Panc1 (cell line): ENCODE measurements at regions of chr7 and their contacts with region 1.

Region 1: DNA sequence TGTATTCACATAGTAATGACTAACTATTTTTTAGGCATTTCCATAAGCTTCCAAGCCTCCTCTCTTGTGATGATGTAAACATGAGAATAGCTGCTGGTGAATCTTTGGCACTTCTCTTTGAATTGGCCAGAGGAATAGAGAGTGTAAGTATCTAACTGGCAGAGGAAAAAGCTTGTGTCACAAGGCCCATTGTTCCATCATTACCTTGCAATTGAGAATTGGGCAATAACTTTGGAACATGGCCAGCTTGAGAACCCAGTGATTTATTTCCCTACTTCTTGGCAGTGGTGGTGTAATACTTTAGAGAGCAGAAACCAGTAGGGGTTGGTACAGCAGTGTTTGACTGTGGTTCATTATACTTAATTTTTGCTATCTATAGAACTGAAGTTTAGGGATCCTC is 12.0 kb downstream of the IFRD1 start:
- DNase-seq: no peak
- ATAC-seq: no peak
- H3K4me3 ChIP-seq: no peak overlapping the region
- H3K27ac ChIP-seq: no peak overlapping the region
- H3K4me1 ChIP-seq: no peaks in the 10 kb centered on the region
- H3K27me3 ChIP-seq: no peaks in the 10 kb centered on the region
- CTCF ChIP-seq: no peak

Region 2: DNA sequence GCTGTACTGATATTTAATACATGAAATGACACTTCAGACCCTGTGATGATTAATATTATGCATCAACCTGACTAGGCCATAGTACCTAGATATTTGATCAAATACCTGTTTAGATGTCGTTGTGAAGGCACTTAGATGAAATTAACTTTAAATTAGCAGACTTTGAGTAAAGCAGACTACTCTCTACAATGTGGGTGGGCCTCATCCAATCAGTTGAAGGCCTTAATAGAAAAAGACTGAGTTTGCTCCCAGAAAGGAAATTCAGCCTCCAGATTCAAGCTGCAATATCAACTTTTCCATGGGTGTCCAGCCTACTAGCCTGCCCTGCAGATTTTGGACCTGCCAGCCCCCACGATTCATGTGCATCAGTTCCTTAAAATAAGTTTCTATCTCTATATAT is 396.6 kb after region 1 on chr7:
- CTCF ChIA-PET with region 1: interaction called, 13 read pairs
- POLR2A ChIA-PET with region 1: no interaction called
- in situ Hi-C with region 1: no loop called
- intact Hi-C with region 1: no loop called
- DNase-seq: no peak
- ATAC-seq: no peak
- H3K4me3 ChIP-seq: no peak overlapping the region
- H3K27ac ChIP-seq: no peak overlapping the region
- H3K4me1 ChIP-seq: no peaks in the 10 kb centered on the region
- H3K27me3 ChIP-seq: no peaks in the 10 kb centered on the region
- CTCF ChIP-seq: no peak

Region 3: DNA sequence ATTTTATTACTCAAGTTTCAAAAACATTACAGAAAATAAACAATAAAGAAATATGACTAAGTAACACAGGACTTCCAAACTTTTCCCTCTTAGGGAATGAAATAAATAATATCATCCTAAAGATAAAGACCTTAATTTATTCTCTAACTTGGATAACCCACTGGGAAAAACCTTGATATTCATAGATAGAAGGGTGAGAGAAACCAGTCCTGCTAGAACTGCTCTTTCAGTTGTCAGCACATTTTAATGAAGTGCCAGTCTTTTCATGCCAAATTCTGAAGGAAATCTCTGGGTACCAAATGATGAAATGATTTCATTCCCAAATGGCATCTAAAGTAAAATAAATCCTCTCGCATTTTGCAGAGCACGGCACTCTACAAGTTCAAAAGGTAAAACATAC is 770.6 kb after region 1 on chr7:
- CTCF ChIA-PET with region 1: no interaction called
- POLR2A ChIA-PET with region 1: no interaction called
- in situ Hi-C with region 1: no loop called
- intact Hi-C with region 1: no loop called
- DNase-seq: no peak
- ATAC-seq: no peak
- H3K4me3 ChIP-seq: no peak overlapping the region
- H3K27ac ChIP-seq: no peak overlapping the region
- H3K4me1 ChIP-seq: no peaks in the 10 kb centered on the region
- H3K27me3 ChIP-seq: no peaks in the 10 kb centered on the region
- CTCF ChIP-seq: no peak